Prostate gland (tissue), 2 donors: ENCODE measurements at regions of chr10 and their contacts with region 1.

Region 1: DNA sequence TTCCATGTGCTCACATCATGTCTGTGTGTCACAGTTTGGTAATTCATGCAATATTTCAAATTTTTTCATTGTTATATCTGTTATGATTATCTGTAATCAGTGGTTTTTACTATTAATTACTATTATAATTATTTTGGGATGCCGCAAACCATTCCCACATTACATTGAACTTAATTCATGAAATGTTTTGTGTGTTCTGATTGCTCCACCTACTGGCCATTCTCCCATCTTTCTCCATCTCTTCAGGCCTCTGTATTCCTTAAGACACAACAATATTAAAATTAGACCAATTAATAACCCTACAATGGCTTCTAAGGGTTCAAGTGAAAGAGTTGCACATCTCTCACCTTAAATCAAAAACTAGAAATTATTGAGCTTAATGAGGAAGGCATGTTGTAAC is 398.5 kb downstream of the PCDH15 start:
- DNase-seq: no peak
- H3K4me3 ChIP-seq: no peak overlapping the region
- H3K27ac ChIP-seq: no peak overlapping the region
- H3K4me1 ChIP-seq: no peaks in the 10 kb centered on the region
- H3K27me3 ChIP-seq: no peaks in the 10 kb centered on the region
- CTCF ChIP-seq: peak in 3 of 4 experiments; percentile 25 to 45 (median 30)
- POLR2A ChIP-seq: no peak

Region 2: GRCh38 chr10:53997953-53998352 is 404.6 kb before region 1 on chr10:
- intact Hi-C with region 1: loop called (anchors 5 kb)
- DNase-seq: no peak
- H3K4me3 ChIP-seq: no peak overlapping the region
- H3K27ac ChIP-seq: no peak overlapping the region
- H3K4me1 ChIP-seq: no peaks in the 10 kb centered on the region
- H3K27me3 ChIP-seq: no peaks in the 10 kb centered on the region
- CTCF ChIP-seq: peak in 1 of 4 experiments; percentile 15
- POLR2A ChIP-seq: no peak

Region 3: DNA sequence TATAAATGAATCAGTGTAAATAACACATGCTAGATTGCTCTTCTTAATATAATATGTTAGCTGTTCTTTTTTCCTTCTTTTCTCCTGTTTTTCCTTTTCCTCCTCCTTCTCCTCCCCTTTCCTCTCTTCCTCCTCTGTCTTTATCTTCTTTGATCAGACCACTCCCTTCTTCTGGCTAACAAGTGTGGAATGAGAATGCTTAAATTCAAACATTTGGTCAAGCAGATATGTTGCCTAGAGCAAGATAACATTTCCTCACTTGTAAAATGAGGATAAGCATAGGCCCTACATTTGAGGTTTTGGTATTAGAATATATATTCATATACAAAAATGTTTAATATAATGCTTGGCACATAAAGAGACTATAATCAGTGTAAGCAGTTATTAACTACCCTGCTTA is 99.4 kb after region 1 on chr10:
- intact Hi-C with region 1: no loop called
- DNase-seq: no peak
- H3K4me3 ChIP-seq: no peak overlapping the region
- H3K27ac ChIP-seq: no peak overlapping the region
- H3K4me1 ChIP-seq: no peaks in the 10 kb centered on the region
- H3K27me3 ChIP-seq: no peaks in the 10 kb centered on the region
- CTCF ChIP-seq: no peak
- POLR2A ChIP-seq: no peak